Head of caudate nucleus (tissue), 42 donors: ENCODE measurements at regions of chr16 and their contacts with region 1.

Region 1: GRCh38 chr16:55494994-55495421 is 13.9 kb upstream of the LPCAT2 start:
- DNase-seq: peak in 38 of 42 donors; percentile 21 to 87 (median 66)

Region 2: DNA sequence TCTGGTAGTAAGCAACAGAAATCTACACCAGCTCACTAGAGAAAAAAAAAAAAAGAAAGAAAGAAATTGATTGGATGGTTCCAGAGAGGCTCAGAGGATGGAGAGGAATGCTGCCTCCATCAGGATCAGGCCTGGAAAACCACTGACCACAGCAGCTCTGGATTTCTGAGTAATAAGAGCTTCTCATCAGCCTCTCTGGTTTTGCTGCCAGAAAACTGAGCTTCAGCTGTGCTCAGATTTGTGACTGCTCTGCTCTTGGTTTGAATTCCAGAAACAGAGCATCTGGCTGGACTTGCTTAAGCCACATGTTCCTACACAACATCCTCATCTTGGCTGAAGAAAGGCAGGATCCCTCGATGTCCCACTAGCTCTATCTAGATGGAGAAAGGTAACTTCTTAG is 145.1 kb before region 1 on chr16:
- intact Hi-C with region 1: no loop called
- DNase-seq: no peak

Region 3: DNA sequence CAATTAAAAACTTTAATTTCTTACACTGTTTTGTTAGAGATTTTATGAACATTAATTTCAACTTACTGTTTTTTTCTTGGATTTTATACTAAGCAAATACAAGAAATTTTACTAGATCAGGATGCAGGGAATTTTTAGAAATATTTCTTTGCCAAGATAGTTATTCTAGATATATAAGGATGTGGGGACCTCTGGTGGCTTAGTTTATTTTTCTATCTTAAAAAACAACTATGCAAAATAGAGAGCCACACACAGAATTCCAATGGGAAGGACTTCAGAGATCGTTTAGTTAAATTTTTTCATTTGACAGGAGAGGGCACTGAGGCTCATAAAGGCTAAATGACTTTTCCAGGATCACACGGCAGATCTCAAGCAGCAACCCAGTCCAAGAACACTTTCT is 48.5 kb after region 1 on chr16:
- intact Hi-C with region 1: loop called (anchors 2 kb)
- DNase-seq: peak in 1 of 42 donors; percentile 16

Region 4: DNA sequence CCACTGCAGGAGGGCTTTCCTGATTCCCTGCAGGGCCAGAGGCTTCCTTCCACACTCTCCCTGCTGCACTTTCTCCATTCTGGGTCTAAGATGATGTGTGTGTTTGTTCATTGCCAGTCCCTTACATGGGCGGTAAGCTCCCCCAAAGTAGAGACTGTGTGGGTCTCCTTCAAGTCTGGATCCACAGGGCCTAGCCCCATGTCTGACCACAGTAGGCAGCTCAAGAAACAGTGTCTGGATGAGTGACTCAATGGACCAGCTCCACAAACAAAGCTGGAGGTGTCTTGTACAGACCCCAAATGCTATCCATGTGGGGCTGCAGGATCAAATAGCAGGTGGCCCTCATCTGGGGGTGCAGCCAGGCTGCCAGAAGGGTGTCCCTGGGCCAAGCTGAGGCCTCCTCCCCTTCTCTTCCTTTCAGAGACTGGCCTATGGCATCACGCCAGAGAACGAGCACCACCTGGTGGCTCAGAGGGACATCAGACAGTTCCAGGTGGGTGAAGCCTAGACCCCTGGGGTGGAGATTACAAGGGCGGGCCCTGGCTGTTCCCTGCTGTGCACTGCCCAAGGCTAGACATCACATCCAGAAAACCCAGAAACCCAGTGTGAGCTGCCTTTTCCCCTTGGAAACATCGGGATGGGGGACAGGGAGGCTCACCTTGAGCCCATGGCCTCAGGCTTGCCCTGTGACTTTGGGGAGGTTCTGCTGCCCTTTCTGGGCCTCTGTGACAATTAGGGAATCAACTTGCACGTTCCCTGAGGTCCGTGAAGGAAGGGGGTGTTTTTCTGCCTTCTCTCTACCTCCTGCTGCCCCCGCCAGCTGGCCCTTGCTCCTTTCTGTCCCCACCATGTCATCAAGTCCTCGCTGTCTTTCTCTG is 206.7 kb after region 1 on chr16:
- intact Hi-C with region 1: loop called (anchors 10 kb)
- DNase-seq: peak in 35 of 42 donors; percentile 8 to 74 (median 39)

Region 5: GRCh38 chr16:55876854-55877253 is 381.8 kb after region 1 on chr16:
- intact Hi-C with region 1: no loop called
- DNase-seq: no peak